Stomach (tissue), 19 donors: ENCODE measurements at regions of chr11 and their contacts with region 1.

Region 1: GRCh38 chr11:35822815-35823495 is 120.9 kb upstream of the LDLRAD3 start:
- DNase-seq: no peak
- H3K4me3 ChIP-seq: no peak overlapping the region
- H3K27ac ChIP-seq: no peak overlapping the region
- H3K4me1 ChIP-seq: peaks cover 0 to 22% (median 13%) of the 10 kb centered on the region in 4 donors
- H3K27me3 ChIP-seq: no peaks in the 10 kb centered on the region
- CTCF ChIP-seq: no peak
- EP300 ChIP-seq: no peak
- POLR2A ChIP-seq: no peak

Region 2: GRCh38 chr11:35391922-35392813 is 430.8 kb before region 1 on chr11:
- intact Hi-C with region 1: no loop called
- DNase-seq: peak; percentile 82 to 92
- H3K4me3 ChIP-seq: peak overlapping the region in 2 of 4 donors; percentile 11 to 17
- H3K27ac ChIP-seq: peak overlapping the region; percentile 52 to 80 (median 75)
- H3K4me1 ChIP-seq: peaks cover 28 to 40% (median 28%) of the 10 kb centered on the region in 4 donors
- H3K27me3 ChIP-seq: no peaks in the 10 kb centered on the region
- CTCF ChIP-seq: peak in 5 of 7 experiments; percentile 63 to 92 (median 87)
- EP300 ChIP-seq: no peak
- POLR2A ChIP-seq: no peak

Region 3: GRCh38 chr11:35878741-35879140 is 55.8 kb after region 1 on chr11:
- intact Hi-C with region 1: no loop called
- DNase-seq: no peak
- H3K4me3 ChIP-seq: no peak overlapping the region
- H3K27ac ChIP-seq: no peak overlapping the region
- H3K4me1 ChIP-seq: no peaks in the 10 kb centered on the region
- H3K27me3 ChIP-seq: no peaks in the 10 kb centered on the region
- CTCF ChIP-seq: no peak
- EP300 ChIP-seq: no peak
- POLR2A ChIP-seq: no peak

Region 4: DNA sequence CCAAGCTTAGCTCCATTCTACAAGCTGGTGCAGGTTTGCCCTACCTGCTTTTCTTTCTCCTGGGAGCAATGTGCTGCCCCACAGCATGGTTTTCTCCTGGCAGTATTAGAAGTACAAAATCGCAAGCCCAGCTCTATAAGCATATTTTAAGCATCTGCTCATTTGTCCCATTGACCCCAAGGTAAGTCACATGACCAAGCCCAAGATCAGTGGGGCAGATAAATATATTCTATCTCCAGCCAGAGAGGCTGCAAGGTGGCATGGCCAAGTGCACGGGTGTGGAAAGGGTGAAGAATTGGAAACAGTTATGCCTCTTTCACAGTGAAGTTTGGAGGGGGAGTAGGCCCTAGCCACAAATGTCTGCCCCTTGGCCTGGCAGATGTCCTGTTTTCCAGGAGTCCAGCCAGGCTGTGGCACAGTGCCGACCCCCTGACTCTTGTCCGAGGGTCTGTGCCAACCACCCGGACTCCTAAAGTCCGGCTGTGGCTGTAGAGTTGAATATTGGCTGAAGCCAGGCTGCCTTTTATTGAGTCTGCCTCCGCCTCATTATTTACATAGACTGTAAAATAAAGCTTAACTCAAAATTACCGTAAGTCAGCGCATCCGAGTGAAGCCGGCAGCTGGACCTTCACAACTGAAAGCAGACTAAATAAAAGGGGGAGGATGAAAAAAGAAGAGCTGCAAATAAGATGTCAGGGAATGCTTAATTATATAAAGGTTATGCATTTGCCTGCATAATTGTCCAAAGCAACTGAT is 300.6 kb after region 1 on chr11:
- intact Hi-C with region 1: loop called (anchors 10 kb)
- DNase-seq: peak in 1 of 2 donors; percentile 54
- H3K4me3 ChIP-seq: no peak overlapping the region
- H3K27ac ChIP-seq: no peak overlapping the region
- H3K4me1 ChIP-seq: peaks cover 4 to 19% (median 10%) of the 10 kb centered on the region in 4 donors
- H3K27me3 ChIP-seq: no peaks in the 10 kb centered on the region
- CTCF ChIP-seq: no peak
- EP300 ChIP-seq: no peak
- POLR2A ChIP-seq: no peak

Region 5: DNA sequence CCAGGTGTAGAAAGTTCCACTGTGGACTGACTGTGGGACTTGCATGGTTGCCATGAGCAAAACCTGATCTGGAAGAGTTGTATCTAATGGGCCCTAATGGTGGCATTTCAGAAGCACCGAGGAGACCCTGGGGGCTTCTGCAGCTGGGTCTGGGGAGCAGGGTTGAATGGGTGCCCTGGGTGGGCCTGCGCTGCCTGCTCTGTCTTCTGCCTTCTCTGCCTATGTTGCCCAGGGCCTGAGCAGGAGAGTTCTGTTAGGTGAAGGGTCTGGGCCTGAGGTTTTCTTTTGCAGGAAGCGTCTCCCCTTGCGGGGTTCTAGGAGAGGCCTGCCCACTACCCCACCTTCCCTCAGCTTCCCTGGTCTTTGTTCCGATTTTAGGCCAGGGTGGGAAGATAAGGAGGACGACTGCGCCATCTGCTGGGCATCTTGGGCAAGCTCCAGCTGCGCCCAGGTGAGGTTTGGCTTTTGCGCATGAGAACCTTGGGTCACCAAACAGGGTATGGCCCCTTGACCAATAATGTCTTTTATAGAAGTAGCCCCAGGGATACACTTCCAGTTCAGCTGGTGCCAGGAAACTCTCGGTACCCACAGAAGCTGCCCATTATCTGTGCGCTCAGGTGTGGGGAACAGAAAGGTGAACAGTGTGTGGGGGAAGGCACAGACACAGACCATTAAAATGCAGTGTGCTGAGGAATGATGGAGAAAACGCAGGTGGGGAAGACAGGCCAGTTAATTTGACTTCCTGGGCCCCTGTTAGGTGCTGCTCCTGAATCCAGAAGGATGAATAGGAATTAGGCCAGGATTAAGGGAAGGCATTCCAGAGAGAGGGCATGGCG is 443.1 kb after region 1 on chr11:
- intact Hi-C with region 1: loop called (anchors 10 kb)
- DNase-seq: peak; percentile 60 to 81
- H3K4me3 ChIP-seq: no peak overlapping the region
- H3K27ac ChIP-seq: no peak overlapping the region
- H3K4me1 ChIP-seq: peaks cover 0 to 5% (median 0%) of the 10 kb centered on the region in 4 donors
- H3K27me3 ChIP-seq: peaks cover 0 to 12% (median 0%) of the 10 kb centered on the region in 3 donors
- CTCF ChIP-seq: peak in 5 of 7 experiments; percentile 40 to 79 (median 70)
- EP300 ChIP-seq: no peak
- POLR2A ChIP-seq: no peak